ENCODE measurements at regions of chr7 and their contacts with region 1.

Region 1: DNA sequence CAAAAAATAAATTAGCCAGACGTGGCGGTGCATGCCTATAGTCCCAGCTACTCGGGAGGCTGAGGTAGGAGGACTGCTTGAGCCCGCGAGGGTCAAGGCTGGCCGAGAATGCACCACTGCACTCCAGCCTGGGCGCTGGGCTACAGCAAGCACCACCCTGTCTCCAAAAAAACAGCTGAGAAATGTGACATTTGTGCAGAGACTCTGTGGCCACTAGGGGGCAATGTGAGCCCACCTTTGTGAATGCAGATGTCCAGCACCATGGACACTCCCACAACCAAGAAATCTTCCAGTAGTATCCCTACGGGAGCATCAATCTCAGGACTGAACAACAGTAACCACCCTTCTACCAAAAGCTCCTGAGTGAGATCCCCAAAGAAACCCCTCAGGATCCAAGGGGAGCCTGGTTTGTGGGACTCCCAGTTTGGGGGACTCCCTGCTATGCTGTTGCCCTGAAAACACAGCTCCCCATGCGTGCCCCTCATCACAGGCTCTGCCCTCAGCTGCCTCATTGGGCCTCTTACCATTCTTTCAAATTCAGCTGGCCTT is 6.2 kb upstream of the AHCYL2 start:
- DNase-seq: peak; percentile 86
- ATAC-seq: peak; percentile 85
- H3K4me3 Mint-ChIP-seq: no peak overlapping the region
- H3K27ac Mint-ChIP-seq: no peak overlapping the region
- H3K4me1 Mint-ChIP-seq: peaks cover 17% of the 10 kb centered on the region
- H3K27me3 Mint-ChIP-seq: no peaks in the 10 kb centered on the region

Region 2: DNA sequence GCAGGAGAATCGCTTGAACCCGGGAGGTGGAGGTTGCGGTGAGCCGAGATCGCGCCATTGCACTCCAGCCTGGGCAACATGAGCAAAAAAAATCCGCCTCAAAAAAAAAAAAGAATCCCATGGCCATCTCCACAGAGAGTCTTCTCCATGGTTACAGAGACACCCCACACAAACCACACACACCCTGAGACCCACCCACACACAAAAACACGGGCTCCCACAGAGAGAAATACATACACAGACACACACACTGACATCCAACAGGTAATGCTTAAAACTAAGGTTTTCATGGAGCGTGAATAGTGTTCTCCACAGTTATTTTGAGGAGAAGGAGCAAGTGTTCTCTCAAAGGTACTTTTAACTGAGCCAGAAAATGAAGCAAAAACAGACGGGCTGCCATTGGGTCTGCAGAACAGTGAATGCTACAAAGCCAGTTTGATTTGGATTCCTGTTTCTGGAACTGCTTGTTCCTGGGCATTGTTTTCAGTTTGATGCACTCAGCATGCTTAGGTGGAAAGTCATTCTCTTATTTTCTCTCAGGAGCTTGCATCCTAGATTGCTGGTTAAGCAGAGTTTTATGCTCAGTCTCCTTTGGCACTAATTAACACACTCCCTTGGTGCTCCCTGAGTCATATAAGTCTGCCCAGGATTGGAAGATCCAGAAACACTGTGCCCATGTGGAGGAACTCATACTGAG is 21.7 kb after region 1 on chr7:
- CTCF ChIA-PET with region 1: interaction called, 13 read pairs
- POLR2A ChIA-PET with region 1: no interaction called
- DNase-seq: no peak
- ATAC-seq: no peak
- H3K4me3 Mint-ChIP-seq: no peak overlapping the region
- H3K27ac Mint-ChIP-seq: no peak overlapping the region
- H3K4me1 Mint-ChIP-seq: no peaks in the 10 kb centered on the region
- H3K27me3 Mint-ChIP-seq: no peaks in the 10 kb centered on the region

Region 3: GRCh38 chr7:129279762-129280161 is 61.2 kb after region 1 on chr7:
- CTCF ChIA-PET with region 1: interaction called, 156 read pairs
- POLR2A ChIA-PET with region 1: no interaction called
- DNase-seq: no peak
- ATAC-seq: no peak
- H3K4me3 Mint-ChIP-seq: no peak overlapping the region
- H3K27ac Mint-ChIP-seq: no peak overlapping the region
- H3K4me1 Mint-ChIP-seq: peaks cover 6% of the 10 kb centered on the region
- H3K27me3 Mint-ChIP-seq: no peaks in the 10 kb centered on the region

Region 4: DNA sequence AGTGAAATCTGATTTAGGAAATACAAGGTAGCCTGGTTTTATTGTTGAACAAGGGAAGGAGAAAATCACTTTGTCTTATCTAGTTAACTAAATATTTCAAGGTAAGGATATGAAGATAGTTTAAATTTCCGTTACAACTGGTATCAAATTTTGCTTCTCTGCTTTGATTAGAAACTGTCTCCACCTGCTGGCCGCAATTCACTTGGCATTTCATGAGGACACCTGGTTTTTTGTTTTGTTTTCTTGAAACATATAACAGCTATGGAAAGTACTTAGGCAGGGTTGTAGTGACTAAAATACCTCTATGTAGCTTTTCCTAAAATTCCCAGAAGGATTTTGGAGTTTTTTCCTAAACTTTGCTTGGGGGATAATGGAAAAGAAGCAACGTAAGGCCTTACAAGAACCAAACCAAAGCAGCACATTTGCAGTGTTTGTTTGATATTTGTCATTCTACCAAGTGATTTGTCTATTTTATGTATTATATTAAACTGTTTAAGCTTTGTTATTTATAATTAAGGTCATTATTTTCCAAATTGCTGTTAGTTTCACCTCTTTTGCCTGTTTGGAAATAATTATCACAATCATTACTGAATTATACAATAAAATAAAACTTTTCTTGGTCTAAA is 79.8 kb after region 1 on chr7:
- CTCF ChIA-PET with region 1: interaction called, 76 read pairs
- POLR2A ChIA-PET with region 1: interaction called, 3 read pairs
- DNase-seq: peak; percentile 71
- ATAC-seq: no peak
- H3K4me3 Mint-ChIP-seq: no peak overlapping the region
- H3K27ac Mint-ChIP-seq: no peak overlapping the region
- H3K4me1 Mint-ChIP-seq: no peaks in the 10 kb centered on the region
- H3K27me3 Mint-ChIP-seq: no peaks in the 10 kb centered on the region

Region 5: DNA sequence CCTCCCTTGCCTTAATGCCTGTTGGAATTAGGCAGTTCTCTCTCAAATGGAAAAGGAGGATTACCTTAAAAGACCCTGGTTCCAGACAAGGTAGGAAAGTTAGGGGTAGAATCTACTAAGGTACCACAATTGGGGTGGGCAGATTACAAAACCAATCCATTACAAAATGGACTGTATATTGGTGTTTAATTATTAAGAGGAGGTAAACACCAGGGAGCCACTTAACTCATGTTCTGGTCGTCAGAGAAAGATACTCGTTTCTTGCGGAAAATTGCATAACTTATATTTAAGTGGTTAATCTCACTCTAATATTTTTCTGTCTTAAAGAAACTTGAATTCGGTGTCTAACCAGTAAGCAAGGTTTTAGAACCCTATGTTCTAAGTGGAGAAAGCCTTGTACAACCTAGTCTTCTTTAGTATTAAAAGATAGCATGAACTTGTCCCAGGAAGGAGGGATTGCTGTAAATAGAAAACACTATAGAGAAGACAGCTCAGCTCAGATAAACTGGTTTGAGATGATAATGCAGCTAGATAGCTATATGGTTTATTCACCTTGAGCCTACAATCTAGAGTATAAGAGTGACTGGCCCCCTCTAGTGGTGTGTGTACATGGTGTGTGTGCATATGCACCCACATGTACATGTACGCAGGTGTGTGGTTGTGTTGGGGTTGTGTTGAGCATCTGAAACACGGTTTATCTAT is 157.6 kb after region 1 on chr7:
- CTCF ChIA-PET with region 1: interaction called, 35 read pairs
- POLR2A ChIA-PET with region 1: no interaction called
- DNase-seq: peak; percentile 61
- ATAC-seq: peak; percentile 79
- H3K4me3 Mint-ChIP-seq: no peak overlapping the region
- H3K27ac Mint-ChIP-seq: no peak overlapping the region
- H3K4me1 Mint-ChIP-seq: peaks cover 16% of the 10 kb centered on the region
- H3K27me3 Mint-ChIP-seq: no peaks in the 10 kb centered on the region